Stomach (tissue), 19 donors: ENCODE measurements at regions of chr11 and their contacts with region 1.

Region 1: DNA sequence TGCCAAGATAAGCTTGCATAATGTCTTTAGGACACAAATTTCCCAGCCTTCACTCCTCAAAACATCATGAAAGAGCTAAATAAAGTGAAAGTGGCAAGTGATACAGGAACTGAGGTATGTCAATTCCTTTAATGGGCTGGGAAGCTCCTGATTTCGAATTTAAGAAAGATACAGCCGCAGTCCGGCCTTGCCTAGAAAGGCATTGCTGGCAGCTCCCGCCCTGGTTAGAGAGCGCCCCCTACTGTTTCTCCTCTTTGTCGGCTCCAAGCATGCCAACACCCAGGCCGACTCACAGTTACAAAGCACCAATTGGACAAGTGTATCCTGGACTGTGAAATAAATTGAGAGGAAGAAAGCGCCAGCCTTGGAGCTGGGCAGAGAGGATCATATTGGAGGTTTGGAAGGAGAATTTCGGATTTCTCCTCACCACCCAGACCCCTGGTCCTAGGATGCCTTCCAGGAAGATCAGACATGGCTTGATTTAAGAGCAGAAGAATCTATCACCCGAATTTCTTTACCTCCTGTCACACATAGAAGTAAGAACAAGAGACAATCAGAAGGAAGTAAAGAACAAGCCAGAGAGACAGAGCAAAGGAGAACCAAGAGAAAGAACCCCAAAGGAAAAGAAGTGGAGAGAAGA is 84.0 kb downstream of the FAM76B start:
- DNase-seq: peak; percentile 85 to 95
- H3K4me3 ChIP-seq: no peak overlapping the region
- H3K27ac ChIP-seq: peak overlapping the region in 4 of 5 donors; percentile 30 to 63 (median 53)
- H3K4me1 ChIP-seq: peaks cover 12 to 47% (median 31%) of the 10 kb centered on the region in 4 donors
- H3K27me3 ChIP-seq: no peaks in the 10 kb centered on the region
- CTCF ChIP-seq: peak in 5 of 7 experiments; percentile 72 to 91 (median 85)
- EP300 ChIP-seq: no peak
- POLR2A ChIP-seq: no peak

Region 2: DNA sequence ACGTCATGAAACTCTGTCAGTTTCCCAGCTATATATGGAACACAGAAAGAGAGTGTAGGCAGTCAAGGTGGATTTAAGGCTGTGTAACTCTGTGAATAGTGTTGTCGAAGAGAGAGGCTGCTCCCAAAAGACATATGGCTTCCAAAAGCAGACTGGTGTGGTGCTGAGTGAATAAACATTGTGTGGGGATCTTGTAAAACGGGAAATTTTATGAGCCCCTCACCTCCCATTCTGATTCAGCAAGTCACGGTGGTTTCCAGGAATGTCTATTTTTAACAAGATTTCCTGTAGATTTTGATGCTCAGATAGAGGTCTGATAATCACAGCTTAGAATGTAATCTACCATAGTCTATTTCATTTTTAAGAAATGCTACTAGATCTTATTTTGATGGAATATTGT is 542.5 kb before region 1 on chr11:
- intact Hi-C with region 1: loop called (anchors 5 kb)
- DNase-seq: no peak
- H3K4me3 ChIP-seq: no peak overlapping the region
- H3K27ac ChIP-seq: no peak overlapping the region
- H3K4me1 ChIP-seq: peaks cover 0 to 2% (median under 1%) of the 10 kb centered on the region in 4 donors
- H3K27me3 ChIP-seq: no peaks in the 10 kb centered on the region
- CTCF ChIP-seq: no peak
- EP300 ChIP-seq: no peak
- POLR2A ChIP-seq: no peak